ENCODE measurements at regions of chr3 and their contacts with region 1.

Region 1: DNA sequence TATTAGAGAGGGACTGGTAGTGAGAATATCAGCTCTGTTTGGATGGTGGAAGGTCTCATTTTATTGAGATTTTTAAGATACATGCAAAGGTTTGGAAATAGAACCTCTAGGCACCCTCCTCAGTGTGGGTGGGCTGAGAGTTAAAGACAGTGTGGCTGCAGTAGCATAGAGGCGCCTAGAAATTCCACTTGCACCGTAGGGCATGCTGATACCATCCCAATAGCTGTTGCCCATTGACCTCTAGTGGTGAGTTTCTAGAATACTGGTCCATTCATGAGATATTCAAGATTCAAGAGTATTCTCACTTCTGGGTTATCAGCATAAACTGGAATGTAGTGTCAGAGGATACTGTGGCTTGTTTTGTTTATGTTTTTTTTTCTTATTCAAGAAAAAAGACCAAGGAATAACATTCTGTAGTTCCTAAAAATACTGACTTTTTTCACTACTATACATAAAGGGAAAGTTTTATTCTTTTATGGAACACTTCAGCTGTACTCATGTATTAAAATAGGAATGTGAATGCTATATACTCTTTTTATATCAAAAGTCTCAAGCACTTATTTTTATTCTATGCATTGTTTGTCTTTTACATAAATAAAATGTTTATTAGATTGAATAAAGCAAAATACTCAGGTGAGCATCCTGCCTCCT is 87.2 kb downstream of the TGFBR2 start:
- DNase-seq: peak; percentile 68
- H3K4me3 Mint-ChIP-seq: no peak overlapping the region
- H3K27ac Mint-ChIP-seq: peak overlapping the region; percentile 70
- H3K4me1 Mint-ChIP-seq: peaks cover 54% of the 10 kb centered on the region
- H3K27me3 Mint-ChIP-seq: no peaks in the 10 kb centered on the region

Region 2: DNA sequence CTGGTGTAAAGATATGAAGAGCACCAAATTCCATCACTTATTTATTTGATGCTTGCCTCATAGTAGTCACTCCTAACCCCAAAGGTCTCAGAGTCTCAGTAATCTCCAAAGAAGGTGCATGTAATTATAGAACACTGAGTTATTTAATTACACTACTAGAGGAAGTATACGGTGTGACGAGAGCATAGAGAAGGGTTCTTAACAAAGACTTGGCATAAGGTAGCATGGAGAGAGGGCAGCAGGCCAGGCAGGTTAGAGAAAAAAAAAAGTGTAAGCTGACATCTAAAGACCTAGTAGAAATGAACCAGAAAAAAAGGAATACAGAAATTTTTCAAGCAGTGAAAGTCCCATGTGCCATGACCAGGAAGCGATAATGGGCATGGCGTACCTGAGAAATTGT is 300.5 kb before region 1 on chr3:
- CTCF ChIA-PET with region 1: no interaction called
- POLR2A ChIA-PET with region 1: no interaction called
- DNase-seq: no peak
- H3K4me3 Mint-ChIP-seq: no peak overlapping the region
- H3K27ac Mint-ChIP-seq: no peak overlapping the region
- H3K4me1 Mint-ChIP-seq: no peaks in the 10 kb centered on the region
- H3K27me3 Mint-ChIP-seq: peaks cover under 1% of the 10 kb centered on the region

Region 3: GRCh38 chr3:30676424-30677346 is 16.9 kb before region 1 on chr3:
- CTCF ChIA-PET with region 1: interaction called, 11 read pairs
- POLR2A ChIA-PET with region 1: no interaction called
- DNase-seq: no peak
- H3K4me3 Mint-ChIP-seq: no peak overlapping the region
- H3K27ac Mint-ChIP-seq: peak overlapping the region; percentile 46
- H3K4me1 Mint-ChIP-seq: peaks cover 92% of the 10 kb centered on the region
- H3K27me3 Mint-ChIP-seq: no peaks in the 10 kb centered on the region

Region 4: GRCh38 chr3:30704931-30705890 is 11.6 kb after region 1 on chr3:
- CTCF ChIA-PET with region 1: interaction called, 10 read pairs
- POLR2A ChIA-PET with region 1: no interaction called
- DNase-seq: no peak
- H3K4me3 Mint-ChIP-seq: no peak overlapping the region
- H3K27ac Mint-ChIP-seq: no peak overlapping the region
- H3K4me1 Mint-ChIP-seq: peaks cover 5% of the 10 kb centered on the region
- H3K27me3 Mint-ChIP-seq: no peaks in the 10 kb centered on the region

Region 5: GRCh38 chr3:30855400-30856292 is 162.1 kb after region 1 on chr3:
- CTCF ChIA-PET with region 1: no interaction called
- POLR2A ChIA-PET with region 1: no interaction called
- DNase-seq: no peak
- H3K4me3 Mint-ChIP-seq: no peak overlapping the region
- H3K27ac Mint-ChIP-seq: no peak overlapping the region
- H3K4me1 Mint-ChIP-seq: no peaks in the 10 kb centered on the region
- H3K27me3 Mint-ChIP-seq: no peaks in the 10 kb centered on the region